B cell (primary cell): ENCODE measurements at regions of chr17 and their contacts with region 1.

Region 1: DNA sequence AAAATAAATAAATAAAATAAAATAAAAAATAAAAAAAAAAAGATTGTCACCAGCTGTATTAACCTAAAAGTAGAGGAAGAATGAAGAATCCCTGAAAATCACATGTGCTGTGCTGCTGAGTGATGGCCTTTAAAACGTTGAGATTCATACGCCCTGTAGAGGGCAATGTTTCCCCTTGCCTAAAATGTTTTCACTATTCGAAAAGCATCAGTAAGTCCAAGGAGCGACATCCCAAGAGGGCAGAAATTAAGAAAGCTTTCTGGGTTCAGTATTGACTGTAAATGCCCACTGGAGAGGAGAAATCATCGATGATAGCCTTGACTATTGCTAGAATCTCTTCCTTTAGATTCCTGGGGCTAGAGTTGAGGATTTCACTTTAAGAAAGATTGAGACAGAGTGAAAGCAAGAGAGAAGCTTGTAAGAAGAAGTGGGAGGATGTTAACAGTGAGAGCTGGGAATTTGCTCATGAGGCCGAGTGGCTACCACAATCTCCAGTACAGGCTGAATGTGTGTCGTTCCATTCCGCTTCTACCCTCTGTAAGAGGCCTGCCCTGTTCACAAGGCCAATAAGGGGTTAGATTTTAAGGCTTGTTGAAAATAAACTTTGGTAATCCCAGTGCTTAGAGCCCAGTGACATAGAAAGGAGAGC is 170.8 kb upstream of the FAM20A start:
- DNase-seq: peak; percentile 65
- ATAC-seq: peak; percentile 49
- H3K4me3 ChIP-seq: peak overlapping the region in 1 of 5 experiments; percentile 25
- H3K4me3 Mint-ChIP-seq: peak overlapping the region; percentile 68
- H3K27ac ChIP-seq: no peak overlapping the region
- H3K27ac Mint-ChIP-seq: peak overlapping the region; percentile 26
- H3K4me1 ChIP-seq: no peaks in the 10 kb centered on the region
- H3K4me1 Mint-ChIP-seq: peaks cover 20% of the 10 kb centered on the region
- H3K27me3 ChIP-seq: no peaks in the 10 kb centered on the region
- H3K27me3 Mint-ChIP-seq: no peaks in the 10 kb centered on the region
- CTCF ChIP-seq: peak; percentile 72

Region 2: GRCh38 chr17:68892658-68893057 is 120.7 kb after region 1 on chr17:
- CTCF ChIA-PET with region 1: no interaction called
- POLR2A ChIA-PET with region 1: no interaction called
- intact Hi-C with region 1: no loop called
- DNase-seq: no peak
- ATAC-seq: no peak
- H3K4me3 ChIP-seq: no peak overlapping the region
- H3K4me3 Mint-ChIP-seq: no peak overlapping the region
- H3K27ac ChIP-seq: no peak overlapping the region
- H3K27ac Mint-ChIP-seq: no peak overlapping the region
- H3K4me1 ChIP-seq: no peaks in the 10 kb centered on the region
- H3K4me1 Mint-ChIP-seq: no peaks in the 10 kb centered on the region
- H3K27me3 ChIP-seq: no peaks in the 10 kb centered on the region
- H3K27me3 Mint-ChIP-seq: peaks cover 4% of the 10 kb centered on the region
- CTCF ChIP-seq: no peak

Region 3: DNA sequence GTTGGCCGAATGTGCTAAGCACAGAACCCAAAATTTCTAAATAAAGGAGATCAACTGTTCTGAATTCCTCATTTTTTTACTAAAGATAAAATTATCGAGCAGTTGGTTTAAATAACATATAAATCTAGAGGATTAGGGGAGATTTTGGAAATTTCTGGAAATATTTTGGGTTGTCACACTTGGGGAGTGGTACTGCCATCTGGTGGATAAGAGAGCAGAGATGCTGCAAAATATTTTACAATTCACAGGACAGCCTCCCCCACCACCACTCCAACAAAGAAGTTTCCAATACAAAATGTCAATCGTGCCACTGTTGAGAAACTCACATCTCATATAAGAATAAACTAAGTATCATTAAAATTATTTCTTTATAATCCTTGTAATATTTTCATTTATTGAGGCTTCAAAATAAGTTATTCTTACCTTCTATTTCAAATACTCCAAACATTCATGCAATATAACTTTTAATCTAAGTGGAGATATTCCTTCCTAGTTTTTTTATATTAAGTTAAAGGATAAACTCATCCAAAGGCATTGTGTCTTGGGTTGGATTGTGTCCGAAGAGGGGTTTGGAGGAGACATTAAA is 200.2 kb after region 1 on chr17:
- CTCF ChIA-PET with region 1: no interaction called
- POLR2A ChIA-PET with region 1: no interaction called
- intact Hi-C with region 1: loop called (anchors 10 kb)
- DNase-seq: no peak
- ATAC-seq: no peak
- H3K4me3 ChIP-seq: no peak overlapping the region
- H3K4me3 Mint-ChIP-seq: no peak overlapping the region
- H3K27ac ChIP-seq: no peak overlapping the region
- H3K27ac Mint-ChIP-seq: no peak overlapping the region
- H3K4me1 ChIP-seq: peaks cover 0 to 3% of the 10 kb centered on the region in 2 donors
- H3K4me1 Mint-ChIP-seq: peaks cover 4% of the 10 kb centered on the region
- H3K27me3 ChIP-seq: no peaks in the 10 kb centered on the region
- H3K27me3 Mint-ChIP-seq: peaks cover 4% of the 10 kb centered on the region
- CTCF ChIP-seq: peak; percentile 40

Region 4: DNA sequence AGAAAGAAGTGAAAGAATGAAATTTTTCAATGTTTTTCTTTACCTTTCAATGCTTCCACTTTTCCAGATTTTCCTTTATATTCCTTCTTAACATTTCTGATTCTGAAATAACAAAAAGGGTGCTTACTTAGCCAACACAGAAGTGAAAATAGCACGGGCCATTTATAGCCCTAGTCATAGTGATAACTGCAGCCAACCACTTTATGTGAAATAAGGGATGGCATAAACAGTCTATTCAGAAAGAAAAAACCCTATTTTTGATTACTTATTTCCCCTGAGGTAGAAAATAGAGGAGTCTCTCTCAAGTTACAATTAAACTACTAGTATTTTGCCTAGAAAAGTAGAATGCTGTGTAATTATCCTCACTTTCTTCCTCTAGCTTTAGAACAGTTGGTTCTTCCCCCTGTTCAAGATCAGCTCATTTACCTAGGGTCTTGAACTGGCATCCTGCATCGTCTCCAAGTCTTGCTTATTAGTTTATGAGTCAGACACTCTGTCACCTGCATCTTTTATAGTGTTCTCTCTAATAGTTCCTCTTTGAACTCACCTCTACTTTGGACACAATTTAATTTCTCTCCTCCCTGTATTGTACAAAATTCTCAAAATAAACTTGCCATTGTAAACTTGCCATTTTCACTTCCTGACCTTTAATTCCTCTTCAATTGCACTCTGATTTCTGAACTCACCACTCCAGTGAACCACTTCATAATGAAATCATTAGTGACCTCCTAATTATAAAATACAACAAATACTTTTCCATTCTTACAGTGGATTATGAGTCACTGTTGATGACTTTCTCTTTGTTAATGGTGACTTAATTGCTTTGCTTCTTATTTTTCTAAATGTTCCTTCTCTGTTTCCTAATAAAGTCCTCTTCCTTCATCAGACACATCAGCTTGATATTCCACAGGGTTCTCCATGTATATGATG is 346.1 kb after region 1 on chr17:
- CTCF ChIA-PET with region 1: interaction called, 3 read pairs
- POLR2A ChIA-PET with region 1: no interaction called
- intact Hi-C with region 1: loop called (anchors 10 kb)
- DNase-seq: peak; percentile 25
- ATAC-seq: peak; percentile 42
- H3K4me3 ChIP-seq: no peak overlapping the region
- H3K4me3 Mint-ChIP-seq: peak overlapping the region; percentile 20
- H3K27ac ChIP-seq: peak overlapping the region in 1 of 2 donors; percentile 69
- H3K27ac Mint-ChIP-seq: peak overlapping the region; percentile 50
- H3K4me1 ChIP-seq: peaks cover 27 to 39% of the 10 kb centered on the region in 2 donors
- H3K4me1 Mint-ChIP-seq: peaks cover 38% of the 10 kb centered on the region
- H3K27me3 ChIP-seq: no peaks in the 10 kb centered on the region
- H3K27me3 Mint-ChIP-seq: no peaks in the 10 kb centered on the region
- CTCF ChIP-seq: no peak

Region 5: GRCh38 chr17:69235338-69235930 is 463.4 kb after region 1 on chr17:
- CTCF ChIA-PET with region 1: interaction called, 64 read pairs
- POLR2A ChIA-PET with region 1: no interaction called
- intact Hi-C with region 1: loop called (anchors 1 kb)
- DNase-seq: peak; percentile 81
- ATAC-seq: peak; percentile 87
- H3K4me3 ChIP-seq: no peak overlapping the region
- H3K4me3 Mint-ChIP-seq: no peak overlapping the region
- H3K27ac ChIP-seq: no peak overlapping the region
- H3K27ac Mint-ChIP-seq: no peak overlapping the region
- H3K4me1 ChIP-seq: peaks cover 0 to 4% of the 10 kb centered on the region in 2 donors
- H3K4me1 Mint-ChIP-seq: peaks cover 4% of the 10 kb centered on the region
- H3K27me3 ChIP-seq: no peaks in the 10 kb centered on the region
- H3K27me3 Mint-ChIP-seq: no peaks in the 10 kb centered on the region
- CTCF ChIP-seq: peak; percentile 89

Region 6: GRCh38 chr17:69246726-69247375 is 474.9 kb after region 1 on chr17:
- CTCF ChIA-PET with region 1: interaction called, 95 read pairs
- POLR2A ChIA-PET with region 1: no interaction called
- intact Hi-C with region 1: loop called (anchors 1 kb)
- DNase-seq: peak; percentile 60
- ATAC-seq: no peak
- H3K4me3 ChIP-seq: no peak overlapping the region
- H3K4me3 Mint-ChIP-seq: no peak overlapping the region
- H3K27ac ChIP-seq: no peak overlapping the region
- H3K27ac Mint-ChIP-seq: no peak overlapping the region
- H3K4me1 ChIP-seq: no peaks in the 10 kb centered on the region
- H3K4me1 Mint-ChIP-seq: no peaks in the 10 kb centered on the region
- H3K27me3 ChIP-seq: no peaks in the 10 kb centered on the region
- H3K27me3 Mint-ChIP-seq: no peaks in the 10 kb centered on the region
- CTCF ChIP-seq: peak; percentile 91

Region 7: GRCh38 chr17:69327060-69327831 is 555.3 kb after region 1 on chr17 and contains the start of gene ABCA5:
- CTCF ChIA-PET with region 1: no interaction called
- POLR2A ChIA-PET with region 1: no interaction called
- intact Hi-C with region 1: loop called (anchors 5 kb)
- DNase-seq: peak; percentile 95
- ATAC-seq: peak; percentile 93
- H3K4me3 ChIP-seq: peak within 1 kb of the TSS; percentile 39 to 88 (median 80)
- H3K4me3 Mint-ChIP-seq: peak within 1 kb of the TSS; percentile 96
- H3K27ac ChIP-seq: peak within 1 kb of the TSS; percentile 86 to 90
- H3K27ac Mint-ChIP-seq: peak within 1 kb of the TSS; percentile 98
- H3K4me1 ChIP-seq: peaks cover 7 to 12% of the 10 kb centered on the region in 2 donors
- H3K4me1 Mint-ChIP-seq: peaks cover 17% of the 10 kb centered on the region
- H3K27me3 ChIP-seq: peaks cover 0 to 11% (median 1%) of the 10 kb centered on the region in 4 experiments
- H3K27me3 Mint-ChIP-seq: peaks cover 12% of the 10 kb centered on the region
- CTCF ChIP-seq: no peak
- total RNA-seq, gene ABCA5: 37.2 and 37.8 TPM in 2 replicates

Region 8: DNA sequence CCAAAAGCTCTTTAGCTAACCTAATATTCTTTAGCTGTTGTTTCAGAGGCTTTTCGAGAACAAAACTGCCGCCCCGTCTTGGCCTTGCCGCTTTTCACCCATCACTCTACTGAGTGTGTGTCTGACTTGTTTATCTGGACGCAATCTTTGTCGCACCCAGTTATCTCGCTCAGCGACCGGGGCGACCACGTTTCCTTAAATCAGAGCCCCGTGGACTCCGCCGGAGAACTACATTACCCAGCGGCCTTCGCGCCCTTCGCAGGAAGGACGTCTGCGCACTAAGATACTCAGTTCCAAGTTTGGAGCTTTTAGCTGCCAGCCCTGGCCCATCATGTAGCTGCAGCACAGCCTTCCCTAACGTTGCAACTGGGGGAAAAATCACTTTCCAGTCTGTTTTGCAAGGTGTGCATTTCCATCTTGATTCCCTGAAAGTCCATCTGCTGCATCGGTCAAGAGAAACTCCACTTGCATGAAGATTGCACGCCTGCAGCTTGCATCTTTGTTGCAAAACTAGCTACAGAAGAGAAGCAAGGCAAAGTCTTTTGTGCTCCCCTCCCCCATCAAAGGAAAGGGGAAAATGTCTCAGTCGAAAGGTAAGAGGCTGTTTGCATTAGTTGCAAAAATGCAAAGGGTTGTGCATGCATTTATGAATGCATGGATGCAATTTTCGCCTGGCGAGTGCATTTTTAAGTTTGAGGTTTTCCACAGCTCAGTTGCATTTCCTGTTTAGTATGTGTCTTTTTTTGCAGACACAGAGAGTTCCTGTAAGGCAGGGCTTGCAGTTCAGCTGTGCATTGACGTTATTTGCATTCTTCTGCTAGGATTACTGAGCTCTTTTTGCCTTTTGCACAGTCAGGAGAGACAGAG is 642.6 kb after region 1 on chr17 and contains the start of gene MAP2K6:
- CTCF ChIA-PET with region 1: no interaction called
- POLR2A ChIA-PET with region 1: no interaction called
- intact Hi-C with region 1: loop called (anchors 10 kb)
- DNase-seq: peak; percentile 83
- ATAC-seq: peak; percentile 99
- H3K4me3 ChIP-seq: peak within 1 kb of the TSS; percentile 56 to 90 (median 73)
- H3K4me3 Mint-ChIP-seq: no peak within 1 kb of the TSS
- H3K27ac ChIP-seq: no peak within 1 kb of the TSS
- H3K27ac Mint-ChIP-seq: no peak within 1 kb of the TSS
- H3K4me1 ChIP-seq: peaks cover 14 to 18% of the 10 kb centered on the region in 2 donors
- H3K4me1 Mint-ChIP-seq: no peaks in the 10 kb centered on the region
- H3K27me3 ChIP-seq: no peaks in the 10 kb centered on the region
- H3K27me3 Mint-ChIP-seq: no peaks in the 10 kb centered on the region
- CTCF ChIP-seq: no peak
- total RNA-seq, gene MAP2K6: 7.7 TPM in 2 replicates